BJ (cell line): ENCODE measurements at regions of chr7 and their contacts with region 1.

Region 1: GRCh38 chr7:12490117-12490688 is 80.3 kb upstream of the SCIN start:
- DNase-seq: no peak
- H3K4me3 ChIP-seq: no peak overlapping the region
- H3K27me3 ChIP-seq: no peaks in the 10 kb centered on the region
- CTCF ChIP-seq: peak; percentile 43

Region 2: GRCh38 chr7:12257582-12257981 is 232.6 kb before region 1 on chr7:
- CTCF ChIA-PET with region 1: no interaction called
- POLR2A ChIA-PET with region 1: no interaction called
- DNase-seq: no peak
- H3K4me3 ChIP-seq: no peak overlapping the region
- H3K27me3 ChIP-seq: no peaks in the 10 kb centered on the region
- CTCF ChIP-seq: no peak

Region 3: GRCh38 chr7:12434009-12434642 is 56.1 kb before region 1 on chr7:
- CTCF ChIA-PET with region 1: interaction called, 10 read pairs
- POLR2A ChIA-PET with region 1: no interaction called
- DNase-seq: no peak
- H3K4me3 ChIP-seq: no peak overlapping the region
- H3K27me3 ChIP-seq: no peaks in the 10 kb centered on the region
- CTCF ChIP-seq: peak; percentile 41

Region 4: DNA sequence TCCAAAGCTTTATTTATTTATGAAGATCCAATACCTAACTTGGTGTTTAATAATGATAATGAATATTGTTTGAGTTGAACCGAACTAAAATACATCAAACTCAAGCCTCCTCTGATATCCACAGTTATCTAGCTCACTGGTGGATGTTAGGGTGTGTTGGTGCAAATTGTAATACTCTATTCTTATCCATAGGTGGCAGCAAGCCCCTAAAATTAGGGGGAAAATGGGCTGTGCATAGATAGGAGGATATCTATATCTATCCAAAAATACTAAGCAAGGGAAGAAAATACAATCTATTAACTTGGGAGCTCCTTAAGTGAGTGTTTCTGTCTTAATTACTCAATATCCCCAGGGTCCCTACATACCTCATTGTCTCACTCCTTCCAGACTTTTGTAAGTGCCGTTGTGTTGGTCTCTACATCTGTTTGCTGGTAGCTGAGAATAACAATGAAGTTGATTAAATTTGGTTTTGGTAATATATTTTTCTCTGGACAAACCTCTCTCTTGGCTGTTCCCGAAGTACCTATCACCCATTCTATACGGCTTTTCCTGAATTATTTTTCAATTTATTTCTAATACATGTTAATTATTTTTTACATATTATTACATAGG is 31.6 kb before region 1 on chr7:
- CTCF ChIA-PET with region 1: interaction called, 30 read pairs
- POLR2A ChIA-PET with region 1: no interaction called
- DNase-seq: no peak
- H3K4me3 ChIP-seq: no peak overlapping the region
- H3K27me3 ChIP-seq: no peaks in the 10 kb centered on the region
- CTCF ChIP-seq: peak; percentile 67